Naive thymus-derived CD4-positive, alpha-beta T cell (primary cell): ENCODE measurements at regions of chr7 and their contacts with region 1.

Region 1: DNA sequence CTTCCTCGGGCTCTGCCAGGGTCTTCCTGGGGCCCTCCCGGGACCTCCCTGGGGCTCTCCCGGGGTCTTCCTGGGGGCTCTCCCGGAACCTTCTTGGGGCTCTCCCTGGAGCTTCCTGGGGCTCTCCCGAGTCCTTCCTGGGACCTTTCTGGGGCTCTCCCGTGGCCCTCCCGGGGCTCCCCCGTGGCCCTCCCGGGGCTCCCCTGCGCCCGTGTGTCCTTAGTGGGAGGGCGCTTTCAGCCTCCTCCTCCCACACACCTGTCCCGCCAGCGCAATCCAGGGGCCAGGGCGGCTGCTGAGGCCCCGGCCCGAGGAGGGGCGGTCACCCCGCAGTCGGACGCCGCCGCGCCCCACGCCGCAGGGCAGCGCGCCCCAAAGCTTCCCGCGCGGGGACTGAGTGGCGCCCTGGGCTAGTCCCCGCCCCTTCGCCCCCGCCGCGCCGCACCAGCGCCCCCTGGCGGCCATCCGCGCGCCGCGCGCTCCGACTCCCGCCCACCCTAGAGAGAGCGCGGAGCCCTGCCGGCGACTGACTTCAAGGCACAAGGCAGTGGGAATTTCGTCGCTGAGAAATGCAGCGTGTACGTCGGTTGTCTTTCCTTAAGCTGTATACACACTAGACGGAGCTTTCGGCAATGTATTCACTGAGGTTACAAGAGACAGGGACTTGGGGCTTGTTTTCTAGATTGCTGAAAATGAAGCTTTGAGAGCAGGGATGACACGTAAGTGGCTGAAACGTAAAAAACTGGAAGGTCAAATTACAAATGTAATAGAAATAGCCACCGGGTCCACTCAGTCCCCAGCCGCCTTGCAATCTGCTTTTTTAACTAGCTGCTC is 47.1 kb downstream of the INSIG1 start:
- DNase-seq: peak; percentile 65 to 93 (median 82)
- ATAC-seq: peak; percentile 99
- H3K4me3 ChIP-seq: peak overlapping the region; percentile 35
- H3K4me3 Mint-ChIP-seq: peak overlapping the region in 9 of 10 donors; percentile 47 to 83 (median 69)
- H3K27ac ChIP-seq: no peak overlapping the region
- H3K27ac Mint-ChIP-seq: peak overlapping the region in 1 of 9 donors; percentile 52
- H3K4me1 ChIP-seq: peaks cover 4 to 9% of the 10 kb centered on the region in 2 donors
- H3K4me1 Mint-ChIP-seq: peaks cover 3 to 12% (median 5%) of the 10 kb centered on the region in 7 donors
- H3K27me3 ChIP-seq: peaks cover 0 to 2% of the 10 kb centered on the region in 2 donors
- H3K27me3 Mint-ChIP-seq: peaks cover 0 to 34% (median 7%) of the 10 kb centered on the region in 5 donors

Region 2: GRCh38 chr7:154913638-154914312 is 431.0 kb before region 1 on chr7:
- CTCF ChIA-PET with region 1: interaction called, 4 read pairs
- POLR2A ChIA-PET with region 1: no interaction called
- intact Hi-C with region 1: loop called (anchors 1 kb)
- DNase-seq: peak; percentile 71 to 89 (median 82)
- ATAC-seq: peak; percentile 96
- H3K4me3 ChIP-seq: peak overlapping the region; percentile 56
- H3K4me3 Mint-ChIP-seq: peak overlapping the region; percentile 76 to 95 (median 90)
- H3K27ac ChIP-seq: no peak overlapping the region
- H3K27ac Mint-ChIP-seq: peak overlapping the region in 8 of 9 donors; percentile 17 to 85 (median 66)
- H3K4me1 ChIP-seq: no peaks in the 10 kb centered on the region
- H3K4me1 Mint-ChIP-seq: peaks cover 3 to 7% (median 4%) of the 10 kb centered on the region in 7 donors
- H3K27me3 ChIP-seq: no peaks in the 10 kb centered on the region
- H3K27me3 Mint-ChIP-seq: peaks cover 4 to 25% (median 14%) of the 10 kb centered on the region in 5 donors

Region 3: GRCh38 chr7:155069992-155070751 is 274.6 kb before region 1 on chr7 and contains the start of gene HTR5A:
- CTCF ChIA-PET with region 1: no interaction called
- POLR2A ChIA-PET with region 1: no interaction called
- intact Hi-C with region 1: loop called in 1 of 2 experiments (anchors 10 kb)
- DNase-seq: peak; percentile 58 to 87 (median 78)
- ATAC-seq: peak; percentile 99
- H3K4me3 ChIP-seq: no peak within 1 kb of the TSS
- H3K4me3 Mint-ChIP-seq: no peak within 1 kb of the TSS
- H3K27ac ChIP-seq: no peak within 1 kb of the TSS
- H3K27ac Mint-ChIP-seq: peak within 1 kb of the TSS in 1 of 9 donors; percentile 19
- H3K4me1 ChIP-seq: no peaks in the 10 kb centered on the region
- H3K4me1 Mint-ChIP-seq: peaks cover 0 to 5% (median 0%) of the 10 kb centered on the region in 7 donors
- H3K27me3 ChIP-seq: peaks cover 0 to 15% of the 10 kb centered on the region in 2 donors
- H3K27me3 Mint-ChIP-seq: peaks cover 28 to 67% (median 52%) of the 10 kb centered on the region in 5 donors
- total RNA-seq, gene HTR5A: not detected

Region 4: DNA sequence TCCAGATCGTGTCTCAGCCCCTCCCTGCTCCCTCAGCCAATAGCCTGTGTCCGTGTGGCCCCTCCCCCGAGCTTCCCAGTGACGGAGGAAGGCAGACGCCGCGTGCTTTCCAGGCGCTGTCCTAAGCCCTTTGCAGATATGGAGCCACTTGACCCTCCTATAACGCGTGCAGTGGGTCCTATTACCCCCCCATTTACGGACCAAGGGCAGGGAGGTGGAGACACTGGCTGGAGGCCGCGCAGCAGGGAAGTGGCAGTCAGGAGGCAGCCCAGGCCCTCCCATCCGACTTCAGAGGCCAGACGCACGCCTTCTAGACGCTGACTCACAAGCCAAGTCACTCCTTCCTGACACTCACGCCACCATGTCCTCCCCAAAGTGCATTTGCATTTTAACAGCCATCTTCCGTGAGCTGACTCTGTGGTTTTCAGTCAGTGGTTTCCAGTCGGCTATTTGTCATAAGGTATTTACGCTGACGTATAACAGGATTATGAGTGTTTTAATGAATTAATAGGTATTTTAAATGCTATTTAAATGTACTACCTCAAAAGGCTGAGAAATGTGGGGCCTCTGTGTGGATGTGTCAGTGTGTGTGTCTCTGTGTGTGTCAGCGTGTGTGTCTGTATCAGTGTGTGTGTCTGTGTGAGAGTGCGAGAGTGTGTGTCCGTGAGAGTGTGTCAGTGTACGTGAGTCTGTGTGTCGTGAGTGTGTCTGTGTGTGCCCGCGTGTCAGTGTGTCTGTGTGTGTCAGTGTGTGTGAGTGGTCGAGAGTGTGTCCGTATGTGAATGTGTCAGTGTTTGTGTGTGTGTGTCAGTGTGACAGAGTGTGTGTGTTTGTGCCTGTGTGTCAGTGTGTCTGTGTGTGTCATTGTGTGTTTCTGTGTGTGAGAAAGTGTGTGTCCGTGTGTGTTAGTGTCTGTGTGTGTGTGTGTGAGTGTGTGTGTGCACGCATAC is 139.2 kb before region 1 on chr7:
- CTCF ChIA-PET with region 1: interaction called, 3 read pairs
- POLR2A ChIA-PET with region 1: interaction called, 5 read pairs
- intact Hi-C with region 1: loop called (anchors 1 kb)
- DNase-seq: peak; percentile 68 to 90 (median 79)
- ATAC-seq: peak; percentile 90
- H3K4me3 ChIP-seq: peak overlapping the region; percentile 52
- H3K4me3 Mint-ChIP-seq: peak overlapping the region; percentile 70 to 94 (median 86)
- H3K27ac ChIP-seq: peak overlapping the region; percentile 8
- H3K27ac Mint-ChIP-seq: peak overlapping the region; percentile 56 to 99 (median 86)
- H3K4me1 ChIP-seq: peaks cover 8 to 11% of the 10 kb centered on the region in 2 donors
- H3K4me1 Mint-ChIP-seq: peaks cover 19 to 30% (median 21%) of the 10 kb centered on the region in 7 donors
- H3K27me3 ChIP-seq: no peaks in the 10 kb centered on the region
- H3K27me3 Mint-ChIP-seq: no peaks in the 10 kb centered on the region

Region 5: GRCh38 chr7:155263332-155264143 is 81.3 kb before region 1 on chr7:
- CTCF ChIA-PET with region 1: interaction called, 4 read pairs
- POLR2A ChIA-PET with region 1: no interaction called
- intact Hi-C with region 1: loop called in 1 of 2 experiments (anchors 1 kb)
- DNase-seq: no peak
- ATAC-seq: peak; percentile 4
- H3K4me3 ChIP-seq: no peak overlapping the region
- H3K4me3 Mint-ChIP-seq: no peak overlapping the region
- H3K27ac ChIP-seq: no peak overlapping the region
- H3K27ac Mint-ChIP-seq: no peak overlapping the region
- H3K4me1 ChIP-seq: no peaks in the 10 kb centered on the region
- H3K4me1 Mint-ChIP-seq: peaks cover 0 to 2% (median 0%) of the 10 kb centered on the region in 7 donors
- H3K27me3 ChIP-seq: no peaks in the 10 kb centered on the region
- H3K27me3 Mint-ChIP-seq: peaks cover 0 to 3% (median 0%) of the 10 kb centered on the region in 5 donors